B cell (primary cell): ENCODE measurements at regions of chr1 and their contacts with region 1.

Region 1: GRCh38 chr1:205812878-205813754 is at the start of gene SLC41A1:
- DNase-seq: peak; percentile 96
- ATAC-seq: peak; percentile 96
- H3K4me3 ChIP-seq: peak within 1 kb of the TSS; percentile 52 to 83 (median 80)
- H3K4me3 Mint-ChIP-seq: peak within 1 kb of the TSS; percentile 96
- H3K27ac ChIP-seq: peak within 1 kb of the TSS; percentile 60 to 77
- H3K27ac Mint-ChIP-seq: peak within 1 kb of the TSS; percentile 92
- H3K4me1 ChIP-seq: peaks cover 33 to 46% of the 10 kb centered on the region in 2 donors
- H3K4me1 Mint-ChIP-seq: peaks cover 51% of the 10 kb centered on the region
- H3K27me3 ChIP-seq: no peaks in the 10 kb centered on the region
- H3K27me3 Mint-ChIP-seq: no peaks in the 10 kb centered on the region
- CTCF ChIP-seq: no peak
- total RNA-seq, gene SLC41A1: 24.2 and 24.7 TPM in 2 replicates

Region 2: GRCh38 chr1:205827623-205828022 is 14.5 kb after region 1 on chr1:
- CTCF ChIA-PET with region 1: interaction called, 4 read pairs
- POLR2A ChIA-PET with region 1: no interaction called
- intact Hi-C with region 1: loop called (anchors 1 kb)
- DNase-seq: no peak
- ATAC-seq: no peak
- H3K4me3 ChIP-seq: no peak overlapping the region
- H3K4me3 Mint-ChIP-seq: no peak overlapping the region
- H3K27ac ChIP-seq: no peak overlapping the region
- H3K27ac Mint-ChIP-seq: no peak overlapping the region
- H3K4me1 ChIP-seq: peaks cover 0 to 35% of the 10 kb centered on the region in 2 donors
- H3K4me1 Mint-ChIP-seq: peaks cover 35% of the 10 kb centered on the region
- H3K27me3 ChIP-seq: no peaks in the 10 kb centered on the region
- H3K27me3 Mint-ChIP-seq: no peaks in the 10 kb centered on the region
- CTCF ChIP-seq: no peak

Region 3: GRCh38 chr1:205849619-205850355 is 36.7 kb after region 1 on chr1 and contains the start of gene PM20D1:
- CTCF ChIA-PET with region 1: interaction called, 5 read pairs
- POLR2A ChIA-PET with region 1: no interaction called
- intact Hi-C with region 1: loop called (anchors 1 kb)
- DNase-seq: peak; percentile 91
- ATAC-seq: peak; percentile 99
- H3K4me3 ChIP-seq: peak within 1 kb of the TSS in 4 of 5 experiments; percentile 57 to 65 (median 62)
- H3K4me3 Mint-ChIP-seq: peak within 1 kb of the TSS; percentile 96
- H3K27ac ChIP-seq: peak within 1 kb of the TSS; percentile 70 to 88
- H3K27ac Mint-ChIP-seq: peak within 1 kb of the TSS; percentile 96
- H3K4me1 ChIP-seq: peaks cover 7 to 9% of the 10 kb centered on the region in 2 donors
- H3K4me1 Mint-ChIP-seq: peaks cover 15% of the 10 kb centered on the region
- H3K27me3 ChIP-seq: no peaks in the 10 kb centered on the region
- H3K27me3 Mint-ChIP-seq: no peaks in the 10 kb centered on the region
- CTCF ChIP-seq: no peak
- total RNA-seq, gene PM20D1: 2.3 and 3.3 TPM in 2 replicates